ENCODE measurements at regions of chr1 and their contacts with region 1.

Region 1: GRCh38 chr1:2642560-2643413 is 10.0 kb upstream of the MMEL1 start:
- DNase-seq: peak; percentile 97
- H3K4me3 ChIP-seq: peak overlapping the region; percentile 64 to 99 (median 86)
- H3K27ac ChIP-seq: peak overlapping the region; percentile 78 to 91 (median 84)
- H3K4me1 ChIP-seq: peaks cover 17 to 44% (median 25%) of the 10 kb centered on the region in 4 donors
- H3K27me3 ChIP-seq: peaks cover 0 to 3% (median 0%) of the 10 kb centered on the region in 4 donors
- CTCF ChIP-seq: peak in 2 of 3 experiments; percentile 21 to 30
- EP300 ChIP-seq: no peak
- POLR2A ChIP-seq: no peak

Region 2: GRCh38 chr1:2330511-2331199 is 312.1 kb before region 1 on chr1:
- intact Hi-C with region 1: no loop called
- DNase-seq: no peak
- H3K4me3 ChIP-seq: peak overlapping the region in 1 of 4 donors; percentile 25
- H3K27ac ChIP-seq: peak overlapping the region; percentile 77 to 85 (median 80)
- H3K4me1 ChIP-seq: peaks cover 15 to 30% (median 25%) of the 10 kb centered on the region in 4 donors
- H3K27me3 ChIP-seq: no peaks in the 10 kb centered on the region
- CTCF ChIP-seq: peak; percentile 5 to 33 (median 11)
- EP300 ChIP-seq: no peak
- POLR2A ChIP-seq: no peak

Region 3: DNA sequence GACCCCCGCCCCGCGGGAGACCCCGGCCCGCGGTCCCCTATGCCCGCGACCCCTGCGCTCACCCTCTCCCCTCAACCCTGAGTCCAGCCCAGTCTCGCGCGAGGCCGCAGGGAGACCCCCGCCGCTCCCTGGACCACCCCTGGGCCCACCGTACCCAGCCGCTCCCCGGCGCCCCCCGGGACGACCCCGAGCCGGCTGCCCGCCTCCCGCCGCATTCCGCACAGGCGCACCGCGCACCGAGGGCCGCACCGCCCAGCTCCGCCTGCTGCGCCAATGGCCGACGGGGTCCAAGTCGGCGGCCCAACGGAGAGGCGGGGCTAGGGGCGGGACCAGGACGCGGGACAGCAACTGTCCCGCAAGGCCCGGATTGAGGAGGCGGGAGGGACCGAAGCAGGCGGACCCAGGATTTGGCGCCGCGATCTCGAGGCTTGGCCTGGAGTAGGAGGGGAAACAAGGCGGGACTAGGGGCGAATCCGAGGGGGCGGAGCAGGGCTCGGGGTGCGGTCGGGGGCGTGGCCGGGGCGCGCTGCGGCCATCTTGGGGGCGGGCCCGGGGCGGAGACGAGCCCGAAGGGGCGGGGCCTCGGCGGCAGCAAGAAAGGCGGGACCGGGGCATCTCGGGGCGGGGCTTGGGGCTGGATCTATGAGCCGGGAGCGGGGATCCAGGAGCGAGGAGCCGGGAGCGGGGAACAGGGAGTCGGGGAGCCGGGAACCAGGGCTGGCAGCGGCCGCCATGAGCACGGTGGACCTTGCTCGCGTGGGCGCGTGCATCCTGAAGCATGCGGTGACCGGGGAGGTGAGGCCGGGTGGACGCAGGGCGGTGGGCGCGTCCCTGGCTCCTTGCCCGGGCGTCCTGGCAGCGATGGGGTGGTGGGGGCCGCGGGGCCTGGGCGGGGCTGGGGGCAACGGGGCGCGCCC is 56.4 kb before region 1 on chr1 and contains the start of gene PRXL2B:
- intact Hi-C with region 1: loop called (anchors 2 kb)
- DNase-seq: peak; percentile 100
- H3K4me3 ChIP-seq: peak within 1 kb of the TSS; percentile 82 to 95 (median 88)
- H3K27ac ChIP-seq: peak within 1 kb of the TSS; percentile 92 to 99 (median 98)
- H3K4me1 ChIP-seq: peaks cover 22 to 49% (median 40%) of the 10 kb centered on the region in 4 donors
- H3K27me3 ChIP-seq: no peaks in the 10 kb centered on the region
- CTCF ChIP-seq: no peak
- EP300 ChIP-seq: no peak
- POLR2A ChIP-seq: peak; percentile 81
- total RNA-seq, gene PRXL2B: 7.9 to 18.8 (median 14.8) TPM

Measured in esophagus muscularis mucosa (tissue), 4 donors.